Activated CD4-positive, alpha-beta T cell treated with anti-CD3 and anti-CD28 coated beads for 36 hours (primary cell): ENCODE measurements at regions of chr1 and their contacts with region 1.

Region 1: DNA sequence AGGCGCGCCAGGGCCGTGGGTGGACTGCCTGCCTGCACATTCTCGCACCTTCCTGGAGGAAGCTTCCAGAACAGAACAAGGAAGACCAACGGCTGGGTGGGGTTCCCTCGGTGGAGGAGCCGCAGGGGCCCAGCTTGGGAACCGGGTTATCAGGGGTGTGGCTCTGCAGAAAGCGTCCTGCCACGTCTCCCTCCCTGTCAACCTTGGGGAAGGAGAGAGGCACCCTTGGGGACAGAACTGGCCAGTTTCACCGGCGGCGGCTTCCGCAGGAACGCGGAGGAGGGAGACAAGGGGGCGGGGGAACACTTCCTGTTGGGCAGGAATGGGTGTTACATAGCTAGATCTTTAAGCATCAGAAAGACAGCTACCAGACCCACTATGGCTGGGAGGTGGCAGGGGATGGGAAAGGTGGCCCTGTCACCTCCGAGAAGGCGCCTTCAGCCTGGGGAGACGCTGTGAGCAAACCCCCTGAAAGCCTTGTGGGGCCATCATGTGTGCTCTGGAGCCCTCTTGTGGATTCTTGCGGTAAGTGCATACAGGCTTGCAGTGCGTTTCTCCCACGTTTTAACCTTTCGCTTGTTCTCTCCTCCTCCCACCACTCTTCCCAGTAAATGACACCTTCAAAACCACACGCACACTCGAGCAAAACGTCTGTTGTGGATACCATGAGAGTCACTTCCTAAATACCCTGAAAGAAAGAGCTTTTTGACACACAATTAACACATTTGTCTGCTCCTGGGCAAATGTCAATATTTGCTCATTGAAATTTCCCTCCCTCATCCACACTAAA is 3.8 kb upstream of the PLEKHA6 start:
- DNase-seq: peak; percentile 87
- ATAC-seq: peak; percentile 81
- H3K4me3 Mint-ChIP-seq: peak overlapping the region; percentile 60
- H3K27ac Mint-ChIP-seq: peak overlapping the region; percentile 85
- H3K4me1 Mint-ChIP-seq: peaks cover 33% of the 10 kb centered on the region
- H3K27me3 Mint-ChIP-seq: peaks cover 2% of the 10 kb centered on the region

Region 2: GRCh38 chr1:204207136-204207616 is 156.4 kb before region 1 on chr1:
- CTCF ChIA-PET with region 1: interaction called, 24 read pairs
- POLR2A ChIA-PET with region 1: no interaction called
- intact Hi-C with region 1: loop called (anchors 1 to 2 kb)
- DNase-seq: peak; percentile 89
- ATAC-seq: peak; percentile 98
- H3K4me3 Mint-ChIP-seq: no peak overlapping the region
- H3K27ac Mint-ChIP-seq: no peak overlapping the region
- H3K4me1 Mint-ChIP-seq: peaks cover 12% of the 10 kb centered on the region
- H3K27me3 Mint-ChIP-seq: peaks cover 26% of the 10 kb centered on the region

Region 3: DNA sequence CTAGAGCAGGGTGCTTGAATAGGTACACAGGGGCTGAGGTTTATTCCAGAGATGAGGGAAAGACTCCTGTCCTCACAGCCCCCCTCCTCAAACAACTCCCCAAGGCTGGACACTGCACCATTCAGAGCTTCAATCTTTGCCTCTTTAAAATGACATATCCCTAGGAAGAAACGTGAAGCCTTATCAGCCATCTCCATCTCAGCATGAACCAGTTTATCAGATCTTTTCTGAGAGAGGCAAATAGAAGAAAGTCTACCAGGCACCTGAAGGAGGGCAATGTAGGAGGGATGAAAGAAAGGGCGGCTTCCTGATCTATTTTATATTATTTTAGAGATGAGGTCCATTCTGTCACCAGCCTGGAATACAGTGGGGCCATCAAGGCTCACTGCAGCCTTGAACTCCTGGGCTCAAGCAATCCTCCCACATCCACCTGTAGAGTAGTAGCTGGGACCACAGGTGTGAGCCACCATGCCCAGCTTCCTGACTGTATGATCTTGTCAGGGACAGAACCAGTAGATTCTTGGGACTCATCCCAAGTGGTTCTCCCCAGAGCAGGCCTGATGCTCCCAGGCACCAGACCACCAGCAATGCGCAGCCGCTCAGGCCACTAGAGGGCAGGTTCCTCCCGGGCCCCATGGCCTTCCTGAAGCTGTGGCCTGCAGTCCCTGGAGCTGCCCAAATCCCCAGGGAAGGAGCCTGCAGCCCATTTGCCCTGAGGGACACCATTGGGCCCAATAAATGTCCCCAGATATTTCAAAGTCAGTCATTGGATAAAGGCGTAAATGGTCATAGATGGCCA is 105.4 kb before region 1 on chr1:
- CTCF ChIA-PET with region 1: interaction called, 12 read pairs
- POLR2A ChIA-PET with region 1: no interaction called
- intact Hi-C with region 1: loop called (anchors 1 kb)
- DNase-seq: peak; percentile 71
- ATAC-seq: peak; percentile 66
- H3K4me3 Mint-ChIP-seq: no peak overlapping the region
- H3K27ac Mint-ChIP-seq: no peak overlapping the region
- H3K4me1 Mint-ChIP-seq: no peaks in the 10 kb centered on the region
- H3K27me3 Mint-ChIP-seq: no peaks in the 10 kb centered on the region

Region 4: GRCh38 chr1:204323887-204324286 is 39.6 kb before region 1 on chr1:
- CTCF ChIA-PET with region 1: interaction called, 17 read pairs
- POLR2A ChIA-PET with region 1: interaction called, 5 read pairs
- intact Hi-C with region 1: loop called (anchors 1 kb)
- DNase-seq: peak; percentile 86
- ATAC-seq: peak; percentile 99
- H3K4me3 Mint-ChIP-seq: no peak overlapping the region
- H3K27ac Mint-ChIP-seq: peak overlapping the region; percentile 84
- H3K4me1 Mint-ChIP-seq: peaks cover 28% of the 10 kb centered on the region
- H3K27me3 Mint-ChIP-seq: peaks cover 8% of the 10 kb centered on the region